CD8-positive, alpha-beta memory T cell (primary cell): ENCODE measurements at regions of chr6 and their contacts with region 1.

Region 1: DNA sequence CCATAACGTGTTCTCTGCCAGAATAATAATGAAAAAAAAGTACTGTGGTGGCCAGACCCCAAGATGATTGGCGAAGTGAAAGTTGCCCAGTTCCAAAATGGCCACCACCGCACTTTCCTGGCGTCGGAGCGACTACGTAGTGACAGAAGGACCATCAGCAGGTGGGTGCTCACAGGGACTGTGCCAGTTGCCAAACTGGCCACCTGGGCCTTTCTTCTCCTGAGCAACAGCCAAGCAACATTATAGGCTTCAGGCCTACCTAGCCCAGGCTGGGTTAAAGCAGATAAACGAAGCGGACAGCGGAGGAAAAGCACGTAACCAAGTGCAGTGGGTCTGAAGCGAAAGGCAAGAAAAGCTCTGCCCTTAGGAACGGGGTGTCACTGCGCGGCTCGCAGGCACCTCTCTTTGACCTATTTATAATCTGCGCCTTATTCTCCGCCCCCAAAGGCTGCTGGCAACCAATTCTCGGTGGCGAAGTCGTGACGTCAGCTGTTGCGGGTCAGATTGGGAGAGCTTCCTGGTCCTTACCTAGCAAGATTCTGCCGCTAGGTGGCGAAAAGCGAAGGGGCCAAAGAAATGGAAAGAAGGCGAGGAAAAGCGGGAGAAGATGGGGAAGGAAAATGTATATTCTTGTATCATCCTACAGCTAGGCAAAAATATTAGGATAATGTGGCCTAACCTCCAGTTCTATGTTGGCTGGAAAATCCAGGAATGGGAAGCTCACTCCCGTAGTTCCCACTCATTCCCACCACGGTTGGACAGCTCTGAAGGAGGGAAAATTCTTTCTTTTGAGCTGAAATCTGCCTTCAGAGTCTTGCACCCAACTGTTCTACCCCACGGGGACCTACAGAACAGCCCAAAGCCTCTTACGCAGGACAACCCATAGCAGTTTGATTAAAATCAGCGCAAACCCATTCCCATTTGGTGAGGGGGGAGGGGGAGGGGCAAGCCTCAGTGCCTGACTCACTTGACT is 6.9 kb upstream of the MOG start:
- DNase-seq: peak; percentile 96 to 99 (median 98)
- H3K4me3 ChIP-seq: peak overlapping the region; percentile 87
- H3K4me3 Mint-ChIP-seq: peak overlapping the region; percentile 86 to 100 (median 97)
- H3K27ac ChIP-seq: peak overlapping the region; percentile 92
- H3K27ac Mint-ChIP-seq: peak overlapping the region; percentile 88 to 100 (median 100)
- H3K4me1 ChIP-seq: peaks cover 14% of the 10 kb centered on the region
- H3K4me1 Mint-ChIP-seq: peaks cover 10 to 20% (median 15%) of the 10 kb centered on the region in 3 donors
- H3K27me3 ChIP-seq: no peaks in the 10 kb centered on the region
- H3K27me3 Mint-ChIP-seq: peaks cover 6 to 7% of the 10 kb centered on the region in 2 donors

Region 2: GRCh38 chr6:29632789-29633533 is 17.0 kb before region 1 on chr6 and contains the start of gene GABBR1:
- CTCF ChIA-PET with region 1: interaction called, 34 read pairs
- POLR2A ChIA-PET with region 1: interaction called, 9 read pairs
- DNase-seq: peak; percentile 58 to 75 (median 66)
- H3K4me3 ChIP-seq: peak within 1 kb of the TSS; percentile 66
- H3K4me3 Mint-ChIP-seq: peak within 1 kb of the TSS; percentile 83 to 97 (median 89)
- H3K27ac ChIP-seq: peak within 1 kb of the TSS; percentile 25
- H3K27ac Mint-ChIP-seq: peak within 1 kb of the TSS; percentile 53 to 96 (median 90)
- H3K4me1 ChIP-seq: peaks cover 29% of the 10 kb centered on the region
- H3K4me1 Mint-ChIP-seq: peaks cover 37 to 48% (median 38%) of the 10 kb centered on the region in 3 donors
- H3K27me3 ChIP-seq: peaks cover 4% of the 10 kb centered on the region
- H3K27me3 Mint-ChIP-seq: peaks cover 3 to 18% of the 10 kb centered on the region in 2 donors
- total RNA-seq, gene GABBR1: 8.3 to 8.8 TPM

Region 3: DNA sequence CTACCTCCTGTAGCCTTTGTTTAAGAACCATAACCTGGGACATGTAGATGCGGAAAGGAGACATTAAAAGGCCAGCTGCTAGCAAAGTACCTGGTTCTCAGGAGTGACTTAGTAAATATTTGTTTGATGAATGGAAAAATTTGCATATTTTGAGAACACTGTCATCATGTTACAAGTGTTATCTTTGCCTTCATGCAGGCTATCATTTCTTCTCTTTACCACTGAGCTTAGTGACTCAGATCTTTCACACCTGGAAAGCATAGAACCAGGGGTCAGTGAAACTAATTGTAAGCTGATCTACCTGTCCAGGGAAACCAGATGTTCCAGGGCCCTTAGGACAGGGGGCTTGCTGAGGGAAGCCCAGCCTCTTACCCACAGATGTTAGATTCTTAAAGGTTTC is 25.6 kb after region 1 on chr6:
- CTCF ChIA-PET with region 1: interaction called, 14 read pairs
- POLR2A ChIA-PET with region 1: no interaction called
- DNase-seq: no peak
- H3K4me3 ChIP-seq: no peak overlapping the region
- H3K4me3 Mint-ChIP-seq: no peak overlapping the region
- H3K27ac ChIP-seq: no peak overlapping the region
- H3K27ac Mint-ChIP-seq: peak overlapping the region in 2 of 8 donors; percentile 47 to 75
- H3K4me1 ChIP-seq: no peaks in the 10 kb centered on the region
- H3K4me1 Mint-ChIP-seq: peaks cover 4 to 39% (median 7%) of the 10 kb centered on the region in 3 donors
- H3K27me3 ChIP-seq: peaks cover 9% of the 10 kb centered on the region
- H3K27me3 Mint-ChIP-seq: peaks cover 3 to 13% of the 10 kb centered on the region in 2 donors

Region 4: DNA sequence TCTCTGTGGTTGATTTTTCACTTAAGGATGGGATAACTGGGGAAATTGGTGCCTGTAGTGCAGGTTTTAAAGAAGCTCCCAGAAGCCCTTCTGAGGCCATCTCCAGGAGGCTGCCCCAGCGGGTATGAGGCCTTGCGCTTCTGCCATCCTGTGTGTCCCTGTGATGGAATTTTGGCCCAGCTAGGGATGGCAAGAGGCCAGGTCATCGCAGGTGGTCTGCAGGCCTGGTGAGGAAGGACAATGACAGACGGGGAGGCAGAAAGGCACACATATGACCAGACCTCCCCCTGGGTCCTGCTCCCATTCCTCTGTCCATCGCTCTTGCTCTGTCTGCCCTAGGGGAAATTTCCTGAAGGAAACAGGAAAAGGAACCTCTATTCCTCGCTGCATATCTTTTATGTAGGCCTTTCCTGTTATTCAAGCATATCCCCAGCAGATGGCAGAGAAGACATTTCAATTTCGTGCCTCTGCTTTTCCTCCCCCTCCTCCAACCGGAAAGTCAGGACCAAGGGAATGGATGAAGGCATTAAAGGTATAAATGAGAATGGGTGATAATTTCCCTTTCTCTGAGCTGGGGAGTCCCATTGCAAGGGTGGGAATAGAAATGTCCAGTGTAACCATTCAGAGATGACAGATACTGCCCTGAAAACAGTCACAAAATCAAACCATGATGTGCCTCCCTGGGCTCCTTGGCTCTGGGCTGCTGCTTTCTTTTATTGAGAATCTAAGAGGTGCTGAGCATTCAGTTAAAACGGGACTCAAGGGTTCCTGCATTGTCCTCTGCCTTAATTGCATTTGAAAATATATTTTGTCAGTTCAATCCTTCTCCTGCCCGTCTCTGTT is 55.6 kb after region 1 on chr6:
- CTCF ChIA-PET with region 1: interaction called, 13 read pairs
- POLR2A ChIA-PET with region 1: interaction called, 3 read pairs
- DNase-seq: peak in 1 of 5 donors; percentile 52
- H3K4me3 ChIP-seq: no peak overlapping the region
- H3K4me3 Mint-ChIP-seq: peak overlapping the region in 4 of 7 donors; percentile 4 to 72 (median 50)
- H3K27ac ChIP-seq: no peak overlapping the region
- H3K27ac Mint-ChIP-seq: peak overlapping the region in 7 of 8 donors; percentile 30 to 81 (median 70)
- H3K4me1 ChIP-seq: peaks cover 45% of the 10 kb centered on the region
- H3K4me1 Mint-ChIP-seq: peaks cover 30 to 57% (median 51%) of the 10 kb centered on the region in 3 donors
- H3K27me3 ChIP-seq: no peaks in the 10 kb centered on the region
- H3K27me3 Mint-ChIP-seq: peaks cover 18 to 34% of the 10 kb centered on the region in 2 donors

Region 5: DNA sequence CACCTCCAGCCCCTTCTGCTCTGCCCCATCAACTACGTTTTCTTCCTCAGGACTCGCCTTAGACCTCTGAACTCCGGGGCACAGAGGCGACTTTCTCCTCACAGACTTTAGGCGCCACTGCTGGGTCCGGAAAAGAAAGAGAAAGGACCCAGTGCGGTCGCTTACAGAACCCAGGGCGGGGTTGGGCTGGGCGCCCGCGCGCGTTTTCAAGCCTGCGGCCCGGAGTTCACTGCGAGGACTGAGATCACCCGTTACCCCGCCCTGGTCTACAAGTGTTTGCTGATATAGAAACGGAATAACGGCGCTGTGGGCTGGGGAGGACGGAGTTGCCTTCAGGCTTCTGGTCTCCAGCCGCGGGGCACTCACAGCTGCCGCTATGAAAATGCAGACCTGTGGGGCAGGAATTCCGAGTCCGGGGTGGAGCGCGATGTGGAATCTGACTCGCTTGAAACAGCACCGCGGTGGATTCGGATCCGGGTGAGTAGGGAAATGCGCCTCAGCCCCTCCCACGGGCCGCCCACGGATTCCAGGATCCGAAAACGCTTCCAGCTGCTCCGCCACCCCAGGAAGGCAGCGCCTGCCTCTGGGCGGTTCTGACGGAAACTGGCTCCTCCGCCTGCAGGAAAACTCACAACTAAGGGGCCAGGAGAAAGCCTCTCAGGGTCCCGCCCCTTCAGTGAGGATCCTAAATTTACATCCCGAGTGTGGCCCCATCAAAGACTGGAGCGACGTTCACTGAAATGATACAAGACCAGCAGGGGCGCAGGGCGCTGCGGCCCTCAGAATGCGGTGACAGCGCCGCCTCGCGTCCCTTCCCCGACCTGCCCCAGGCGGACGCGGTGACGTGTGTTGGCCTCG is 102.7 kb after region 1 on chr6:
- CTCF ChIA-PET with region 1: interaction called, 17 read pairs
- POLR2A ChIA-PET with region 1: interaction called, 6 read pairs
- DNase-seq: peak; percentile 74 to 87 (median 79)
- H3K4me3 ChIP-seq: peak overlapping the region; percentile 93
- H3K4me3 Mint-ChIP-seq: peak overlapping the region; percentile 87 to 98 (median 92)
- H3K27ac ChIP-seq: peak overlapping the region; percentile 82
- H3K27ac Mint-ChIP-seq: peak overlapping the region; percentile 78 to 100 (median 93)
- H3K4me1 ChIP-seq: peaks cover 27% of the 10 kb centered on the region
- H3K4me1 Mint-ChIP-seq: peaks cover 44 to 56% (median 45%) of the 10 kb centered on the region in 3 donors
- H3K27me3 ChIP-seq: no peaks in the 10 kb centered on the region
- H3K27me3 Mint-ChIP-seq: peaks cover 0 to 10% of the 10 kb centered on the region in 2 donors